ENCODE measurements at regions of chr15 and their contacts with region 1.

Region 1: GRCh38 chr15:99250494-99251435 is 516 bp upstream of the LRRC28 start:
- DNase-seq: peak; percentile 98 to 100 (median 98)
- H3K4me3 ChIP-seq: peak overlapping the region; percentile 67 to 98 (median 95)
- H3K4me3 Mint-ChIP-seq: peak overlapping the region; percentile 87 to 92
- H3K27ac ChIP-seq: peak overlapping the region; percentile 78 to 90
- H3K27ac Mint-ChIP-seq: peak overlapping the region; percentile 85 to 95 (median 90)
- H3K4me1 ChIP-seq: peaks cover 28 to 38% of the 10 kb centered on the region in 2 donors
- H3K4me1 Mint-ChIP-seq: peaks cover 27% of the 10 kb centered on the region
- H3K27me3 ChIP-seq: no peaks in the 10 kb centered on the region
- H3K27me3 Mint-ChIP-seq: no peaks in the 10 kb centered on the region
- CTCF ChIP-seq: no peak

Region 2: DNA sequence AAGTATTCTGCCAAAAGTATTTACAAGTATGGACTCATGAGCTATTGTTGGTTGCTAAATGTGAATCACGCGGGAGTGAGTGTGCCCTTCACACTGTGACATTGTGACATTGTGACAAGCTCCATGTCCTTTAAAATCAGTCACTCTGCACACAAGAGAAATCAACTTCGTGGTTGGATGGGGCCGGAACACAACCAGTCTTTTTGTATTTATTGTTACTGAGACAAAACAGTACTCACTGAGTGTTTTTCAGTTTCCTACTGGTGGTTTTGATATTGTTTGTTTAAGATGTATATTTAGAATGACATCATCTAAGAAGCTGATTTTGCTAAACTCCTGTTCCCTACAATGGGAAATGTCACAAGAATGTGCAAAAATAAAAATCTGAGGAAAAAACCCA is 115.6 kb before region 1 on chr15:
- intact Hi-C with region 1: no loop called
- DNase-seq: no peak
- H3K4me3 ChIP-seq: no peak overlapping the region
- H3K4me3 Mint-ChIP-seq: no peak overlapping the region
- H3K27ac ChIP-seq: no peak overlapping the region
- H3K27ac Mint-ChIP-seq: no peak overlapping the region
- H3K4me1 ChIP-seq: no peaks in the 10 kb centered on the region
- H3K4me1 Mint-ChIP-seq: no peaks in the 10 kb centered on the region
- H3K27me3 ChIP-seq: no peaks in the 10 kb centered on the region
- H3K27me3 Mint-ChIP-seq: peaks cover 2 to 6% (median 2%) of the 10 kb centered on the region in 3 donors
- CTCF ChIP-seq: no peak

Region 3: GRCh38 chr15:99928429-99928981 is 677.7 kb after region 1 on chr15:
- intact Hi-C with region 1: loop called in 1 of 2 experiments (anchors 10 kb)
- DNase-seq: peak; percentile 71 to 89 (median 82)
- H3K4me3 ChIP-seq: peak overlapping the region; percentile 32 to 64 (median 35)
- H3K4me3 Mint-ChIP-seq: peak overlapping the region; percentile 75 to 88
- H3K27ac ChIP-seq: peak overlapping the region in 1 of 2 donors; percentile 20
- H3K27ac Mint-ChIP-seq: peak overlapping the region in 6 of 7 donors; percentile 57 to 77 (median 66)
- H3K4me1 ChIP-seq: peaks cover 14 to 17% of the 10 kb centered on the region in 2 donors
- H3K4me1 Mint-ChIP-seq: peaks cover 13% of the 10 kb centered on the region
- H3K27me3 ChIP-seq: peaks cover 10 to 25% of the 10 kb centered on the region in 2 donors
- H3K27me3 Mint-ChIP-seq: peaks cover 30 to 43% (median 32%) of the 10 kb centered on the region in 3 donors
- CTCF ChIP-seq: peak; percentile 56